ENCODE measurements at regions of chr6 and their contacts with region 1.

Region 1: GRCh38 chr6:47631269-47631772 is 67.1 kb upstream of the ADGRF4 start:
- DNase-seq: peak in 1 of 3 donors; percentile 21
- ATAC-seq: peak; percentile 81
- H3K4me3 ChIP-seq: no peak overlapping the region
- H3K4me1 ChIP-seq: peaks cover 22% of the 10 kb centered on the region
- CTCF ChIP-seq: no peak

Region 2: DNA sequence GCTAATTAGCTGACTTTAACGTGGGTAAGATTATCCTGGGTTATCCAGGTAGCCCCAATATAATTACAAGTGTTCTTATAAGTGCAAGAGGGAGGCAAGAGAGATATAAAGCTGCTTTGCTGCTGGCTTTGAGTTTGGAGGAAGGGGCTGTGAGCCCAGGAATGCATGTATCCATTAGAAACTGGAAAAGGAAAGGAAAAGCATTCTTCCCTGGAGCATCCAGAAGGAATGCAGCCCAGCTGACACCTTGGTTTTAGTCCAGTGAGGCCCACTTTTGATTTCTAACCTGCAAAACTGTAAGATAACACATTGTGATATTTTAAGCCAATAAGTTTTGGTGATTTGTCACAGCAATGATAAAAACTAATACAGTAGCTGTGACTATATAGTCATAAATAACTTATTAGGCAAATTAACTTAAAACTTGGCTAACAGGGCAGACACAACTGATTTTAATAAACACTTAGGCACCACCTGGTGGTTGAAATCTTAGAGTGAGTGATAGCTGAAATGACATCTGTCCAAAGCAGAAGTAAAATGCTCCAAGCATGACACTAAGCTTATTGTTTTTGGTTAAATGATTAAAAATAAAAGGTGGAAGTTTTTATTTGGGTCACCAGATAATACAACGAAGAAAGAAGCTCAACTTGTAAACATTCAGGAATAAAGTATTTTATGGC is 102.7 kb after region 1 on chr6:
- intact Hi-C with region 1: loop called in 1 of 2 experiments (anchors 5 kb)
- DNase-seq: peak in 1 of 3 donors; percentile 75
- ATAC-seq: peak; percentile 45
- H3K4me3 ChIP-seq: no peak overlapping the region
- H3K4me1 ChIP-seq: peaks cover 16% of the 10 kb centered on the region
- CTCF ChIP-seq: no peak

Region 3: GRCh38 chr6:47780510-47781356 is 149.4 kb after region 1 on chr6:
- intact Hi-C with region 1: loop called in 1 of 2 experiments (anchors 5 kb)
- DNase-seq: peak in 2 of 3 donors; percentile 33 to 51
- ATAC-seq: peak; percentile 92
- H3K4me3 ChIP-seq: no peak overlapping the region
- H3K4me1 ChIP-seq: no peaks in the 10 kb centered on the region
- CTCF ChIP-seq: no peak

Region 4: GRCh38 chr6:47865206-47865605 is 233.9 kb after region 1 on chr6:
- intact Hi-C with region 1: no loop called
- DNase-seq: no peak
- ATAC-seq: no peak
- H3K4me3 ChIP-seq: no peak overlapping the region
- H3K4me1 ChIP-seq: no peaks in the 10 kb centered on the region
- CTCF ChIP-seq: no peak